Ascending aorta (tissue), 2 donors: ENCODE measurements at regions of chr6 and their contacts with region 1.

Region 1: GRCh38 chr6:154510143-154510905 is at the start of gene CNKSR3:
- DNase-seq: peak; percentile 55 to 93
- H3K4me3 ChIP-seq: peak within 1 kb of the TSS; percentile 67 to 79
- H3K27ac ChIP-seq: peak within 1 kb of the TSS; percentile 91 to 93
- H3K4me1 ChIP-seq: peaks cover 0 to 9% of the 10 kb centered on the region in 2 donors
- H3K27me3 ChIP-seq: no peaks in the 10 kb centered on the region
- CTCF ChIP-seq: peak in 1 of 3 experiments; percentile 16
- total RNA-seq, gene CNKSR3: 9.7 TPM

Region 2: DNA sequence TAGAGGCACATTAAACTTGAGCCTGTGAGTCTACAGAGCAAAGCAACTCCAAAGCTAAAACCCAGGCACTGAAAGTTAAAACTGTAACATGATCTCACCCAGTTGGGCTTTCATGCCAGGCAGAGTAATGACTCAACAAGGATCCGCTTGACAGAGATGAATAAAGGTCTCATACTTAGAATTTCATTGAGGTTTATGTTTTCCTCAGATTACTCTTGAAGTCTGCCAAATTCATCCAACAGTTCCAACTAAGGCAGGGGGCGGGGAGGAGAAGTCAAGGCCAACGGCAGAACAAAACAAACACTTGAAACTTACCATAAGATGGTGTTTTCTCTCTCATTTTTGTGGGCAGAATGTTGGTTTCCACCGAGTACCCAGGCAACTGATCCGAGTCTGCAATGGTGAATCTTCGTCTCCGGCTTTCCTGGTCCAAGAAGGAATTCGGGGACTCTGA is 99.7 kb before region 1 on chr6:
- intact Hi-C with region 1: loop called (anchors 2 kb)
- DNase-seq: peak in 1 of 2 donors; percentile 86
- H3K4me3 ChIP-seq: peak overlapping the region; percentile 11 to 21
- H3K27ac ChIP-seq: peak overlapping the region; percentile 88
- H3K4me1 ChIP-seq: peaks cover 10 to 32% of the 10 kb centered on the region in 2 donors
- H3K27me3 ChIP-seq: no peaks in the 10 kb centered on the region
- CTCF ChIP-seq: no peak

Region 3: GRCh38 chr6:154474636-154475428 is 35.5 kb before region 1 on chr6:
- intact Hi-C with region 1: loop called (anchors 5 kb)
- DNase-seq: peak; percentile 51 to 81
- H3K4me3 ChIP-seq: no peak overlapping the region
- H3K27ac ChIP-seq: peak overlapping the region; percentile 80 to 92
- H3K4me1 ChIP-seq: peaks cover 5 to 43% of the 10 kb centered on the region in 2 donors
- H3K27me3 ChIP-seq: no peaks in the 10 kb centered on the region
- CTCF ChIP-seq: no peak

Region 4: DNA sequence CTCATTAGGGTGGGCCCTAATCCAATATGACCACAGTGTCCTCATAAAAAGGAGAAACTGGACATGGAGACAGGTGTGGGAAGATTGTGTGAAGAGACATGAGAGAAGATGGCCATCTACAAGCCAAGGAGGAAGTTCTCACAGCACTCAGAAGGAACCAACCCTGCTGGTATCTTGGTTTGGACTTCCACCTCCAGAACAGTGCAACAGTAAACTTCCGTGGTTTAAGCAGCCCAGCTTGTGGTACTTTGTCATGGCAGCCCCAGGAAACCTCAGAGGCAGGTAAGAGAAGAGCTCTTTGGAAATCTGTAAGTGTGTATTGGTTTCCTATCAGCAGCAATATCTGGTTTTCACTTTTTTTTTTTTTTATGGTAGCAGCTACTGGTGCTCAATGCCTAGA is 16.7 kb after region 1 on chr6:
- intact Hi-C with region 1: no loop called
- DNase-seq: no peak
- H3K4me3 ChIP-seq: no peak overlapping the region
- H3K27ac ChIP-seq: no peak overlapping the region
- H3K4me1 ChIP-seq: no peaks in the 10 kb centered on the region
- H3K27me3 ChIP-seq: no peaks in the 10 kb centered on the region
- CTCF ChIP-seq: no peak

Region 5: DNA sequence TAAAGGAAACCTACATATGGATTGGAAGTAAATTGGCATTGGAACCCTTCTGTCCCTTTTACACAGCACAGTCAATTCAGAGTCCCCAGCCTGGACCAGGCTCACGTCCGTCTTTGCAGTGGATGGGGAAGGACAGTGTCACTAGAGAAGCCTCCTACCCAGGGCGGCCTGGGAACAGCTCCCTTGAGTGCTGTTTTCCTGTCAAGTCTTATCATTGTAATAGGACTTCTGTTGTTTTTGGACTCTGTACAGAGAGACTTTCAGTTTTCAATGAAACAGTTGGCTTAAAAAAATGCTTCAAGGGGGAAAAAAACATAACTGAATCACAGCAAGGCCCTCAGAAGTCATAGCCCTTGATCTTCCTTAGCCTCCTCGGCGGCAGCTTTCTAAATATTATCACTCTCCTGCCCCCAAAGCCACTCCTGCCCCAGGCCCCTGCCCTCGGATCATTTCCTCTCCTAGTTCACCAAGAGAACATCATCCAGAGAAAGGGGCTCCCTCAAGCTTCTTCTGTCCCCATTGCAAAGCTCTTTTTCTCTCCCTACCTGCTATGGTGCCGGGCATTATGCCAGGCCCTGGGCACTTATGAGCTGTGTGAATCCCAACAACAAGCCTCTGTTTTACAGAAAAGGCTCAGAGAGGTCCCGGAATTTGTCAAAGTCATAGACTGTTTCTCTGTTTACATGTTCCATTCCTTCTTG is 38.0 kb after region 1 on chr6:
- intact Hi-C with region 1: no loop called
- DNase-seq: no peak
- H3K4me3 ChIP-seq: no peak overlapping the region
- H3K27ac ChIP-seq: peak overlapping the region in 1 of 2 donors; percentile 18
- H3K4me1 ChIP-seq: no peaks in the 10 kb centered on the region
- H3K27me3 ChIP-seq: no peaks in the 10 kb centered on the region
- CTCF ChIP-seq: no peak

Region 6: GRCh38 chr6:154653853-154654252 is 143.5 kb after region 1 on chr6:
- intact Hi-C with region 1: loop called (anchors 5 kb)
- DNase-seq: peak; percentile 16 to 70
- H3K4me3 ChIP-seq: no peak overlapping the region
- H3K27ac ChIP-seq: peak overlapping the region; percentile 57
- H3K4me1 ChIP-seq: peaks cover 4 to 13% of the 10 kb centered on the region in 2 donors
- H3K27me3 ChIP-seq: no peaks in the 10 kb centered on the region
- CTCF ChIP-seq: no peak

Region 7: DNA sequence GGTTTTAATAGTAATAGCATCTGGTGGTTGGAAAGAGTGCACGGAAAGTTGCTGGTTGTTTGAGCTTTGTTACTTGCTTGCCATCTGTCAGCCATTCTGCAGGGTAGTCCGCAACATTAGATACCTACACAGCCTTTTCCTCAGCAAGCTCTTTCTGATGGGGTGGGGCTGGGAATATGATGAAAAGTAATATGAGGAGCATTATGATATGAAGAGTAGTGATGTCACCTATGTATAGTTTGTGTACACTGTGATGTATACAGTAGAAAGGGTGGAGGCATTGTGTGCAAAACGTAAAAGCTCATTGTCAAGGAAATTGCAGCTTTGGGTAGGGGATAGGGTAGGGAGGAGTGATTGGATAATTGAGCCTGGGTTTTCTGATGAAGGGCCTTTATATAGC is 239.0 kb after region 1 on chr6:
- intact Hi-C with region 1: no loop called
- DNase-seq: no peak
- H3K4me3 ChIP-seq: no peak overlapping the region
- H3K27ac ChIP-seq: no peak overlapping the region
- H3K4me1 ChIP-seq: peaks cover 4 to 8% of the 10 kb centered on the region in 2 donors
- H3K27me3 ChIP-seq: no peaks in the 10 kb centered on the region
- CTCF ChIP-seq: no peak

Region 8: DNA sequence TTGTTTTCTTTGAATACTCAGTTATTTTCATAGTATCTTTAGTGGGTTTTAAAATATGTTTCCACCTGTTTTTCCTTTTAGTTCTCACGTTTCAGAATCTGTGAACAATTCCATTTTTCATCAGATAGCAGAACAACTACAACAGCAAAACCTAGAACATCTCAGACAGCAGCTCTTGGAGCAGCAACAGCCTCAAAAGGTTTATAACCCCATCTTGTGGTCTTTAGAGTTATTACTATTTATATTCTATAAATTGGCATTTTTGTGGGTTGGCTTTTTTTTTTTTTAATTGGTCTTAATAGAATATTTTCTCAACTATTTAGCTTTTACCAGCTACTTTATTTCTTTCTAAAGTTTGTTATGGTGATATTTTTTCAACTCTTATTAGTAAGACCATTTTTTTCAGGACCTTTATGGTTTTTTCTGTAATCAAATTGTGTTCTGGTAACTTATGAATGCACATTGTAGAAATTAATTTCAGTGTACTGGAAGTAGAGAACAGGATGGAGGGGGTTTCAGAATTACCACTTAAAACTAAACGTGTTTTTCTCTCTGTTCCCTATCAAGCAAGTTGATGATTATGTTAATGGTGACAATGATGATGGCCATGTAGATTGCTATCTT is 295.1 kb after region 1 on chr6:
- intact Hi-C with region 1: loop called (anchors 10 kb)
- DNase-seq: no peak
- H3K4me3 ChIP-seq: no peak overlapping the region
- H3K27ac ChIP-seq: peak overlapping the region in 1 of 2 donors; percentile 69
- H3K4me1 ChIP-seq: no peaks in the 10 kb centered on the region
- H3K27me3 ChIP-seq: no peaks in the 10 kb centered on the region
- CTCF ChIP-seq: peak in 2 of 3 experiments; percentile 33 to 63